Activated CD8-positive, alpha-beta T cell treated with anti-CD3 and anti-CD28 coated beads, Interleukin-2, amount 10 ng/mL, durations not matched to agents 7 days and 5 days (primary cell): ENCODE measurements at regions of chr1 and their contacts with region 1.

Region 1: GRCh38 chr1:67760030-67760821 is 73.0 kb downstream of the GNG12 start:
- DNase-seq: peak; percentile 70
- ATAC-seq: peak; percentile 65
- H3K4me3 Mint-ChIP-seq: no peak overlapping the region
- H3K27ac Mint-ChIP-seq: no peak overlapping the region
- H3K4me1 Mint-ChIP-seq: no peaks in the 10 kb centered on the region
- H3K27me3 Mint-ChIP-seq: peaks cover 18% of the 10 kb centered on the region

Region 2: GRCh38 chr1:67561704-67562113 is 198.5 kb before region 1 on chr1:
- CTCF ChIA-PET with region 1: interaction called, 177 read pairs
- POLR2A ChIA-PET with region 1: interaction called, 3 read pairs
- DNase-seq: peak; percentile 89
- ATAC-seq: peak; percentile 97
- H3K4me3 Mint-ChIP-seq: no peak overlapping the region
- H3K27ac Mint-ChIP-seq: no peak overlapping the region
- H3K4me1 Mint-ChIP-seq: peaks cover 2% of the 10 kb centered on the region
- H3K27me3 Mint-ChIP-seq: no peaks in the 10 kb centered on the region

Region 3: GRCh38 chr1:67582625-67583461 is 177.4 kb before region 1 on chr1:
- CTCF ChIA-PET with region 1: interaction called, 19 read pairs
- POLR2A ChIA-PET with region 1: no interaction called
- DNase-seq: no peak
- ATAC-seq: no peak
- H3K4me3 Mint-ChIP-seq: no peak overlapping the region
- H3K27ac Mint-ChIP-seq: no peak overlapping the region
- H3K4me1 Mint-ChIP-seq: peaks cover 17% of the 10 kb centered on the region
- H3K27me3 Mint-ChIP-seq: peaks cover 4% of the 10 kb centered on the region

Region 4: DNA sequence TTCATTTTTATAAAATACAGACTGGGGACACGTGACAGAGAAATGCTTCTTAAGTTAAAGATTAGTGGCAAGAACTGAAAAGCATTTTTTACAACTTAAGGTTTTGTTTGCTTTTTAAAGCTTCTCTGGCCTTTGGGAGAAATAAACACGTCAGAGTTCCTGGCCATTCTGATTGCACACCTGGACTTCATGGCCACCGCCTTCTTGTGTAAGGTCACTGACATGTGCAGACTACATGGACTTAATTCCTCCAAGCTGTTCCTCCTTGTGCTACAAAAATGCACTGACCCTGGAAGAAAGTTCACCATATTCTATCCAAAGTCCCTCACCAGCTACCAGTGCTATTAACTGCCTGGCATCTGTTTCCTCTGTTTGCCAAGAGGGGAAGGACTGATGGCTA is 19.1 kb before region 1 on chr1:
- CTCF ChIA-PET with region 1: interaction called, 20 read pairs
- POLR2A ChIA-PET with region 1: no interaction called
- DNase-seq: no peak
- ATAC-seq: no peak
- H3K4me3 Mint-ChIP-seq: no peak overlapping the region
- H3K27ac Mint-ChIP-seq: no peak overlapping the region
- H3K4me1 Mint-ChIP-seq: peaks cover 11% of the 10 kb centered on the region
- H3K27me3 Mint-ChIP-seq: peaks cover 7% of the 10 kb centered on the region